MCF 10A (cell line): ENCODE measurements at regions of chr1 and their contacts with region 1.

Region 1: DNA sequence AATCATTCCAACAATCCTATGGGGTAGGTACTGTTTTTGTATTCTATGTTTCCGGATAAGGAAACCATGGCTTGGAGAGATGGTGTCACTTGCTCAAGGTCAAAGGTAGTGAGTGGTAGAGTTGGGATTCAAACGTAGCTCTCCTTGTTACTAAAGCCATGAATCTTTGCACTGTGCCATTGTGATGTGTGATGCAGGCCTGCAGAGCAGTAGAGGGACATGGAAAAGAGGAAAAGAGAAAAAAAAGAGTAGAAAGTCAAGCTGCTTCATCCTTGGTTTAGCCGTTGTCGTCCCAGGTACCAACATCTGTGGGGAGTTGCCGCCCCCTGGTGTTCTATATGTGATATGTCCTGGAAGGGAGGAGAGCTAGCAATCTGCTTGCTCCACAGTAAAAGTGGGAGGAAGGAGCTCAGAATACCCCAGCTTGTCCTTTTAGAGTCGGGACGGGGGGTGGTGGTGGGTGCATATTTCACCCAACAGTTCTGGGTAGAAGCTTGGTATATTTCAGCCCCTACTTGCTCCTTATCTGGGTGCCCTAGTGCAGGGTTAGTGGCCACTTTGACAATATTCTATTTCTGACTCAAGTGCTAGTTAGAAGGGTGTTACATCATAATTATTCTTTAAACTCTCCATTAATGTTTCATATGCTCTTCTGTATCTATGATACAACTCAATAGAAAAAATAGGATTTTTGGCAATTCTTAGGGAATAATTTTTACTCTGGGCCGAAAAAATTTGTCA is 98.4 kb downstream of the EBNA1BP2 start:
- DNase-seq: peak; percentile 84
- H3K4me3 Mint-ChIP-seq: no peak overlapping the region
- H3K27ac Mint-ChIP-seq: no peak overlapping the region
- H3K4me1 Mint-ChIP-seq: peaks cover 12% of the 10 kb centered on the region
- H3K27me3 Mint-ChIP-seq: no peaks in the 10 kb centered on the region
- CTCF ChIP-seq: peak; percentile 77

Region 2: GRCh38 chr1:42777852-42778251 is 295.8 kb before region 1 on chr1:
- CTCF ChIA-PET with region 1: interaction called, 7 read pairs
- POLR2A ChIA-PET with region 1: no interaction called
- intact Hi-C with region 1: loop called (anchors 1 kb)
- DNase-seq: peak; percentile 58
- H3K4me3 Mint-ChIP-seq: no peak overlapping the region
- H3K27ac Mint-ChIP-seq: no peak overlapping the region
- H3K4me1 Mint-ChIP-seq: no peaks in the 10 kb centered on the region
- H3K27me3 Mint-ChIP-seq: no peaks in the 10 kb centered on the region
- CTCF ChIP-seq: peak; percentile 61

Region 3: DNA sequence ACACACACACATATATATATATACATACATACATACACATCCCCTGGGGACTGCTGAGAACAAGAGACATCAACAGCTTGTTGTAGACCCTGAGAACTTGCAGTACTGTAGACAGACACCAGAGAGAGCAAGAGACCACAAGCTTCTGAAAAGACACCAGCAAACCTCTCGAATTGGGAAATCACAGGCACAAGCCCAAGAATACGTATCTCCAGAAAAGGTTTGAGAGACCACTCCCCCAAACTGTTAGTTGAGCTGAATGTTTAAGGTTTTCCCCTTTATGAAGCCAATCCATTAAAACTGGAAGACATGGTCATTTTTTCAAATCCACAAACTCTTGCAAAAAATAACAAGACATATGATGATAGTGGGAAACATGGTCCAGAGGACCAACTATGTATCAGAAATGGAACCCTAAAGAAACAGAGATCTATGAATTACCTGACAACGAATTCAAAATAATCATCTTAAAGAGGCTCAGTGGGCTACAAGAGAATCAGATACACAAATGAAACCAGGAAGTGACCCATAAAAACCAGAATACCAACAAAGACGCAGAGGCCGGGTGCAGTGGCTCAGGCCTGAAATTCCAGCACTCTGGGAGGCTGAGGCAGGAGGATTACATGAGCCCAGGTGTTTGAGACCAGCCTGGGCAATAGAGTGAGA is 160.1 kb before region 1 on chr1:
- CTCF ChIA-PET with region 1: interaction called, 309 read pairs
- POLR2A ChIA-PET with region 1: interaction called, 54 read pairs
- intact Hi-C with region 1: loop called (anchors 1 kb)
- DNase-seq: peak; percentile 88
- H3K4me3 Mint-ChIP-seq: no peak overlapping the region
- H3K27ac Mint-ChIP-seq: no peak overlapping the region
- H3K4me1 Mint-ChIP-seq: no peaks in the 10 kb centered on the region
- H3K27me3 Mint-ChIP-seq: no peaks in the 10 kb centered on the region
- CTCF ChIP-seq: peak; percentile 88

Region 4: GRCh38 chr1:42931108-42931539 is 142.5 kb before region 1 on chr1:
- CTCF ChIA-PET with region 1: interaction called, 39 read pairs
- POLR2A ChIA-PET with region 1: interaction called, 10 read pairs
- intact Hi-C with region 1: loop called (anchors 1 kb)
- DNase-seq: peak; percentile 62
- H3K4me3 Mint-ChIP-seq: no peak overlapping the region
- H3K27ac Mint-ChIP-seq: no peak overlapping the region
- H3K4me1 Mint-ChIP-seq: peaks cover 33% of the 10 kb centered on the region
- H3K27me3 Mint-ChIP-seq: no peaks in the 10 kb centered on the region
- CTCF ChIP-seq: peak; percentile 66

Region 5: GRCh38 chr1:42941640-42942330 is 131.9 kb before region 1 on chr1:
- CTCF ChIA-PET with region 1: interaction called, 39 read pairs
- POLR2A ChIA-PET with region 1: interaction called, 16 read pairs
- intact Hi-C with region 1: no loop called
- DNase-seq: peak; percentile 94
- H3K4me3 Mint-ChIP-seq: peak overlapping the region; percentile 54
- H3K27ac Mint-ChIP-seq: peak overlapping the region; percentile 58
- H3K4me1 Mint-ChIP-seq: peaks cover 78% of the 10 kb centered on the region
- H3K27me3 Mint-ChIP-seq: no peaks in the 10 kb centered on the region
- CTCF ChIP-seq: no peak

Region 6: GRCh38 chr1:43048601-43049011 is 25.1 kb before region 1 on chr1:
- CTCF ChIA-PET with region 1: interaction called, 20 read pairs
- POLR2A ChIA-PET with region 1: no interaction called
- intact Hi-C with region 1: no loop called
- DNase-seq: peak; percentile 79
- H3K4me3 Mint-ChIP-seq: no peak overlapping the region
- H3K27ac Mint-ChIP-seq: no peak overlapping the region
- H3K4me1 Mint-ChIP-seq: peaks cover 15% of the 10 kb centered on the region
- H3K27me3 Mint-ChIP-seq: no peaks in the 10 kb centered on the region
- CTCF ChIP-seq: no peak

Region 7: DNA sequence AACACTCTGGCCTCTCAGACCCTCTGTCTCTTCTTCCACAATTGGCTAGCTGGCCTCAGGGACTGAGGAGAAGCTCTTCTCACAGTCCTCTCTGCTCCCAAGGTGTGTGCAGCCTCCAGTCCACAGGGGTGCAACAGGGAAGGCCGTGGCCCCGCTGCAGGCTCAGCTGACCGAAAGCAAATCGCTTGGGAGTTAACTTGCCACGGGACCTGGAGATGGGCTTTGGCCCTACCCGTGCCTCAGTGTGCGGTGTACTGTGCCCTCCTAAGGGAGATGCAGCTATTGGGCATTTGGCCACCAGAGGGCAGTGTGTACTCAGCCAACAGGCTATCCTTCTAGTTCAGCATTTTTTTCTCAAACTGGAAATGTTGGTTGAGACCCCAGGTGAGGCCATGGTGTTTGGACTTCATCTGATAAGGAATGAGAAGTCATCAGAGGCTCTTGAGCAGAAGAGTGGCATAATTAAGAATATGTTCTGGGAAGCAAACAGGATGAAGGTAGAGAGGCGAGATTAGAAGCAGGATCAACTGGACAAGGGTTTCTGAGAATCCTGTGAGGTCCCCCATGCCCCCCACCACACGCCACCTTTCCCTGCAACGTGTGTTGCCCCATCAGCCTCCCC is 153.6 kb after region 1 on chr1:
- CTCF ChIA-PET with region 1: no interaction called
- POLR2A ChIA-PET with region 1: no interaction called
- intact Hi-C with region 1: loop called (anchors 10 kb)
- DNase-seq: peak; percentile 80
- H3K4me3 Mint-ChIP-seq: no peak overlapping the region
- H3K27ac Mint-ChIP-seq: no peak overlapping the region
- H3K4me1 Mint-ChIP-seq: peaks cover 11% of the 10 kb centered on the region
- H3K27me3 Mint-ChIP-seq: no peaks in the 10 kb centered on the region
- CTCF ChIP-seq: peak; percentile 71